ENCODE measurements at regions of chr3 and their contacts with region 1.

Region 1: GRCh38 chr3:42025370-42026138 is 63.7 kb upstream of the ULK4 start:
- DNase-seq: no peak
- ATAC-seq: peak; percentile 42
- H3K4me3 Mint-ChIP-seq: peak overlapping the region; percentile 70
- H3K27ac Mint-ChIP-seq: peak overlapping the region; percentile 82
- H3K4me1 Mint-ChIP-seq: peaks cover 80% of the 10 kb centered on the region
- H3K27me3 Mint-ChIP-seq: no peaks in the 10 kb centered on the region
- CTCF ChIP-seq: no peak

Region 2: DNA sequence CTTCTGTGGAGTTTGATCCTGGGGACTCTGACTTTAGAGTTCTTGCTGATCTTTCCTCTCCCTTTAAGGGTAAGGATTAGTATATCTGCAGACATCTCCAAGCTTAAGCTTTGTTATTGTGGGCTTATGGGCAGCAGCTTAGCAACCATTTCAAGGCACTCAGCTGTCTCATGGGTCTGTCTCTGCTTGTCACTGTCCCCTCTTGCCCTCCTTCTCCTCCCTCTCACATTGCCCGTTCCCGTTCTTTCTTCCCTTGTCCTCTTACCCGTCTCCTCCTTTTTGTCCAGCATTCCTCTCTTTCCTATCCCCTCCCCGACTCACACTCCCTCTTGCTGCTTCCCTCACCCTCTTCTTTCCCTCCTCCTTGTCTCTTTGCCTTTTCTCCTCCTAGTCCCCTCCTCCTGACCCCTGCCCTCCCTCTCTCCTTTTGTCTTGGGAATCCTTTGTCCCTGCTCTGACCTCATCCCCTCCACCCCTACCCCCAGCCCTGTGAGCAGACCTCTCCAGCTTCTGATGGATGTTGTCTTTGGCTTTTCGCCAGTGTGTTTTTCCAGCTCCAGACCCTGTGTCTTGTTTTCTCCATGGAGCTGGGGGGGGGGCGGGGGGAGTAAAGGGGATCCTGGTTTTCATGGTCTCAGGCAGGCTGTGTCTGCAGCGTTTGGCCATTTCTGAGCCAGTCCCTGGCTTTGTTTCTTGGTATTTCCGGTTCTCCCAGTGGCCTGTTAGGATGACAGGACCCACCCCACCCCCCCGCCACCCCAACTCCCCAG is 17.7 kb after region 1 on chr3:
- CTCF ChIA-PET with region 1: no interaction called
- POLR2A ChIA-PET with region 1: no interaction called
- intact Hi-C with region 1: loop called (anchors 2 kb)
- DNase-seq: no peak
- ATAC-seq: peak; percentile 22
- H3K4me3 Mint-ChIP-seq: no peak overlapping the region
- H3K27ac Mint-ChIP-seq: peak overlapping the region; percentile 68
- H3K4me1 Mint-ChIP-seq: peaks cover 84% of the 10 kb centered on the region
- H3K27me3 Mint-ChIP-seq: no peaks in the 10 kb centered on the region
- CTCF ChIP-seq: no peak